Sciatic nerve (tissue), 2 donors: ENCODE measurements at regions of chr5 and their contacts with region 1.

Region 1: GRCh38 chr5:124741711-124742496 is 4.5 kb downstream of the ZNF608 start:
- DNase-seq: no peak
- ATAC-seq: no peak

Region 2: GRCh38 chr5:124718380-124718789 is 23.5 kb before region 1 on chr5:
- intact Hi-C with region 1: no loop called
- DNase-seq: no peak
- ATAC-seq: no peak

Region 3: GRCh38 chr5:125549322-125549911 is 807.5 kb after region 1 on chr5:
- intact Hi-C with region 1: loop called (anchors 5 kb)
- DNase-seq: no peak
- ATAC-seq: peak; percentile 68